Activated CD4-positive, alpha-beta T cell treated with anti-CD3 and anti-CD28 coated beads for 36 hours (primary cell): ENCODE measurements at regions of chr1 and their contacts with region 1.

Region 1: GRCh38 chr1:110495926-110496600 is 22.9 kb downstream of the KCNA10 start:
- DNase-seq: peak; percentile 90
- ATAC-seq: peak; percentile 92
- H3K4me3 Mint-ChIP-seq: no peak overlapping the region
- H3K27ac Mint-ChIP-seq: no peak overlapping the region
- H3K4me1 Mint-ChIP-seq: no peaks in the 10 kb centered on the region
- H3K27me3 Mint-ChIP-seq: peaks cover 3% of the 10 kb centered on the region

Region 2: DNA sequence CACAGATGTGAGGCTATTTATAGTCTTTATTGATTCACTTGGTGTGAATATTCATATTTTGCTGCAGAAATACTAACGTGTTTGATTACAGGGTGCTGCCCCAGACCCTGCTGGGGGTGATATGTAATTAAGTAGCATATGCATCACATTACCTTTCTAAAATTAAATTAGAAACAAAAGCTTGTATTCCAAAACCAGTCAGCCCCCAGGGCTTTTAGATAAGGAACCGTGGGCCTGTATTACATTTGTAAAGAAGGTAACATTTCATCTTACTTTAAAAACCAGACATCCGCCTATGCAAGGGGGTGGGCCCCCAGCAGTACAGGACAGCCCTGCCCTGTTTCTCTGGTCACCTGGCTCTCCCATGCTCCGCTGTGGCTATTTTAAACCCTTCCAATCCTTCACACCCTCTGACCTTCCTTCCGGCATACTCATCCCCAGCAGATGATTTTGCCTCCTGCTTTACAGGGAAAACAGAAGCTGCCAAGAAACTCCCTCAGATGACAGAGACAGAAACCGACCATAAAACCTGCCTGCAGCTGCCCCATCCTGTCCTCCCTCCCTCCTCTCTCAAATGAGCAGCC is 307.9 kb before region 1 on chr1:
- CTCF ChIA-PET with region 1: interaction called, 10 read pairs
- POLR2A ChIA-PET with region 1: no interaction called
- intact Hi-C with region 1: no loop called
- DNase-seq: no peak
- ATAC-seq: no peak
- H3K4me3 Mint-ChIP-seq: no peak overlapping the region
- H3K27ac Mint-ChIP-seq: no peak overlapping the region
- H3K4me1 Mint-ChIP-seq: peaks cover 8% of the 10 kb centered on the region
- H3K27me3 Mint-ChIP-seq: peaks cover 10% of the 10 kb centered on the region

Region 3: DNA sequence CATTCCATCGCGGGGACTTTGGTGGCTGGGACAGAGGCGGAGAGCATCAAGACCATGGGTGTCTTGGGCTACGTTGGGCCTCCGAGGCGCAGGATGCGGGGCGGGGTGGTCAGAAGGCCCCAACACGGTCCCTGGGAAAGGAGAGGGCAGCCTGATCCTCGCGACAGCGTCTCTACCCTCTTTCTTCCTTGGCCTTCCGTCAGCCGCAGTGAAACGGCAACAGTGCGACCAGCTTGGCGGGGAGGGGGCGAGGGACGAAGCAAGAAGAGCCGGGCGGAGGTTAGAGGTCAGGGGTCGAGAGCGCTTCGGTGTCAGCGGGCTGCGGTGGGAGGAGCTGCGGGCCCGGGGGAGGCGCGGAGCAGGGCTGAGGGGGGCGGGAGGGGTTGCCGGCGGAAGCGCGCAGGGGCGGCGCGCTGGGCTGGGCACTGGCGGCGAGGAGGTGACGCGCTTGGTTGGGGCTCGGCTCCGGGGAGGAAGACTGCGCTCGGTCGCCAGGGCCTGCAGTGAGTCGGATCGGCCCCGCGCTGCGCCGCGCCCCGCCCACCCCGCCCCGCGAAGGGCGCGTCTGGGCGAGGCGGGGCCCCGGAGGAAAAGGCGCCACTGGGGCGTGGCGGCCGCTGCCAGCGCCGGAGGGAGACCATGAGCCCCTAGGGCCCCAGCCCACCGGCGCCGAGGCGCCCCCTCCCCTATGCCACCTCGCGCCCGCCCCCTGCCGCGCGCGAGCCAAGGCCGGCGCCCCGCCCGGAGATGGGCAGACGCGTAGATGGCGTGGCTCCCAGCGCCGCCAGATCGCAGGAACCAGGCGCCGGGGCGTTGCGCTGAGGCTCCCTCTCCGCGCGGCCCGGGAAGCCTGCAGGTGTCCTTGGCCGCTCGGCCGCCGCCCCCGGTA is 286.1 kb before region 1 on chr1 and contains the start of gene KCNC4:
- CTCF ChIA-PET with region 1: interaction called, 121 read pairs
- POLR2A ChIA-PET with region 1: no interaction called
- intact Hi-C with region 1: no loop called
- DNase-seq: peak; percentile 95
- ATAC-seq: peak; percentile 88
- H3K4me3 Mint-ChIP-seq: peak within 1 kb of the TSS; percentile 82
- H3K27ac Mint-ChIP-seq: peak within 1 kb of the TSS; percentile 81
- H3K4me1 Mint-ChIP-seq: peaks cover 49% of the 10 kb centered on the region
- H3K27me3 Mint-ChIP-seq: no peaks in the 10 kb centered on the region
- total RNA-seq, gene KCNC4: 13.9 to 14.3 TPM

Region 4: GRCh38 chr1:110412576-110412975 is 83.5 kb before region 1 on chr1:
- CTCF ChIA-PET with region 1: interaction called, 94 read pairs
- POLR2A ChIA-PET with region 1: no interaction called
- intact Hi-C with region 1: loop called (anchors 1 kb)
- DNase-seq: peak; percentile 78
- ATAC-seq: peak; percentile 50
- H3K4me3 Mint-ChIP-seq: no peak overlapping the region
- H3K27ac Mint-ChIP-seq: no peak overlapping the region
- H3K4me1 Mint-ChIP-seq: peaks cover 11% of the 10 kb centered on the region
- H3K27me3 Mint-ChIP-seq: no peaks in the 10 kb centered on the region

Region 5: DNA sequence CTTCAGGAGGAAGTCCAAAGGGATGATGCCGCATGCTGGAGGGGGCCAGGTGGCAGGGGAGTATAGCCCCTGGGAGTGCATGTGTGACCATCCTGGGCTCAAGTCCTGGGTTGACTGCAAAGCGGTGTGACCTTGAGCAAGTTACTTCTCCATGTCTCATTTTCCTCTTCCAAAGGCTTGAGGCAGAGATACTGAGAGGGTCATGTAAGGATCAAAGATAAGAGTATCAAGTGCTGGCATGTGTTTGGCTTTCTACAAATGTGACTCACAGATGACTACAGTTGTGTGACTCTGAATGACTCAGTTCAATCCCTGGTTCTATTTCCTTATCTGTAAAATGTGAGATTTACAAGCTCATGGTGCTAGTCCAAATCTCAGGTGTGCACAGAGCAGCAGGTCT is 19.0 kb before region 1 on chr1:
- CTCF ChIA-PET with region 1: interaction called, 28 read pairs
- POLR2A ChIA-PET with region 1: no interaction called
- intact Hi-C with region 1: loop called in 1 of 2 experiments (anchors 1 kb)
- DNase-seq: no peak
- ATAC-seq: peak; percentile 96
- H3K4me3 Mint-ChIP-seq: no peak overlapping the region
- H3K27ac Mint-ChIP-seq: no peak overlapping the region
- H3K4me1 Mint-ChIP-seq: peaks cover 12% of the 10 kb centered on the region
- H3K27me3 Mint-ChIP-seq: peaks cover 5% of the 10 kb centered on the region

Region 6: DNA sequence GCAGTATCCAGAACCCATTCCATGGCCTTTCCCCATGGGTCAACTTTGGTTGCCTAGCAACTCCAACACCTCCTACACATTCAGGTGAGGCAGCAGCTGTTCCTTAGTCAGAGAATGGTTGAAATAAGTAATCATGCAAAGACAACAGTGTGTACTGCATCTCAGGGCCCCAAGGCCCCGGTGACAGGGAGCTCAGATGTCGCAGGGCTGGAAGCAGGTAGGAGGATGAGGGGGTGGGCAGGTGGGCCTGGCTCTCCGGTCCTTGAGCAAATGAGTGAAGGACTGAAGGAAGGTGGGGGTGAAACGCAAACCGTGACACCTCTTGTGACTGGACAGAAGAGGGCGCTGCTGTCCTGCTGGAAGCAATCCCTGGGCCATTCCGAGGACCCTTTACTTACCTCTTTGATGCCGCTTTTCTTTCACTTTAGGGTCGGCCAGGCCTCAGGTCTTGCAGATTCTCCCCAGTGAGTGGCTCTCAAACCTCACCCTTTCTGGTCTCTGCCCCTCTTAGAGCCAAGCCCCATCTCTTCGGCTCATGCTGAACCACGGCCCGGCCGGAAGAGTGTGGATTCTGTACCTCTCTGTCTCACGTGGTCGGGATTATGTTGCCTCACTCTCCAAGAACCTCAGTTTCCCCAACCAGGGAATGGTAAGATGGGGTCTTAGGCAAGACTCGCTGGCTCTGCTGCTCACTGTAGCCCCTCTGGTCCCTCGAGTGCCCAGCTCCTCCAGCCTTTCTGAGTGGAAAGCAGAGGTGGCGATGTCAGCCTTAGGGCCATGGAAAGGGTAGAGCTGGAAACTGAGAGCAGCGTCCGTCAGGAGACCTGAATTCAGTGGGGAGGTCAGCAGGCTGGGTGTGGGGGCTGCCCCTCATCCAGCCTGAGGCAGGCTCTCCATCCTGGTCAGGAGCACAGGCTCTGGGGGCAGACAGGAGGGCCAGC is 28.5 kb after region 1 on chr1:
- CTCF ChIA-PET with region 1: interaction called, 55 read pairs
- POLR2A ChIA-PET with region 1: no interaction called
- intact Hi-C with region 1: no loop called
- DNase-seq: peak; percentile 75
- ATAC-seq: peak; percentile 88
- H3K4me3 Mint-ChIP-seq: no peak overlapping the region
- H3K27ac Mint-ChIP-seq: no peak overlapping the region
- H3K4me1 Mint-ChIP-seq: peaks cover 2% of the 10 kb centered on the region
- H3K27me3 Mint-ChIP-seq: peaks cover 25% of the 10 kb centered on the region